Psoas muscle (tissue), 8 donors: ENCODE measurements at regions of chr17 and their contacts with region 1.

Region 1: DNA sequence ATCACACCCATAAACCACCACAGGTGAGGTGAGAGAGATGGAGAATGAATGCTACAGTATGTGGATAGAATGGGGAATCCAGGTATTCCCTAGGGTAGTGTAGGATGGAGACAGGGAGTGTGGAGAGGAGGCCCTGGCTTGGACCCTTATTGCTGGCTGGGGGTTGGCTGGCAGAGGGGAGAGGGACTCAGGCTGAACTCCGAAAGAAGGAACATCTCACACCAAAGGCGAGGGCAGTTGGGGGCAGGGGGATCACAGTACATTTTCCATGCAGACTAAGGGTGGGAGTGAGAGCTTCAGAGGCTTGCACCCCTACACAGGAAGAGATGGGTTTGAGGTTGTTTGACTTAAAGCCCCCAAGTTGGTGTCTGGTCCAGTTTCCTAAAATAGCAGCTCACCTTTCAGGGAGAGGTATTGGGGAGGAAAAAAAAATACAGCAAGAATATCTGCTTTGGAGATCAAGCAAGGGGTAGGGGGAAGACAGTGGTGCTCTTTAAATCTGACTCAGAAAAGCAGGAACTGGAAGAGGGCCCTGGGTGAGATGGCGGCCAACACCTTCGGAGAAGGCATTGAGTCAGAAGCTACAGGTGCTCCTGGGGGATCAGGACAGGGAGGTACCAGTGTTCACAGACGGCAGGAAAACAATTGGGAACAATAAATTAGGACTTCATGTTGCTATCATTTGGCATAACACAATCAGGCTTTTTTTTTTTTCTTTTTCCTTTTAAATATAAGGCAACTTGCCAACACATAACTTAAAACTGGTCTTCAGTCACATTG is 12.4 kb downstream of the TRAF4 start:
- DNase-seq: no peak
- ATAC-seq: no peak
- H3K4me3 ChIP-seq: no peak overlapping the region
- H3K27ac ChIP-seq: no peak overlapping the region
- H3K4me1 ChIP-seq: peaks cover 7% of the 10 kb centered on the region
- H3K27me3 ChIP-seq: no peaks in the 10 kb centered on the region
- CTCF ChIP-seq: no peak

Region 2: DNA sequence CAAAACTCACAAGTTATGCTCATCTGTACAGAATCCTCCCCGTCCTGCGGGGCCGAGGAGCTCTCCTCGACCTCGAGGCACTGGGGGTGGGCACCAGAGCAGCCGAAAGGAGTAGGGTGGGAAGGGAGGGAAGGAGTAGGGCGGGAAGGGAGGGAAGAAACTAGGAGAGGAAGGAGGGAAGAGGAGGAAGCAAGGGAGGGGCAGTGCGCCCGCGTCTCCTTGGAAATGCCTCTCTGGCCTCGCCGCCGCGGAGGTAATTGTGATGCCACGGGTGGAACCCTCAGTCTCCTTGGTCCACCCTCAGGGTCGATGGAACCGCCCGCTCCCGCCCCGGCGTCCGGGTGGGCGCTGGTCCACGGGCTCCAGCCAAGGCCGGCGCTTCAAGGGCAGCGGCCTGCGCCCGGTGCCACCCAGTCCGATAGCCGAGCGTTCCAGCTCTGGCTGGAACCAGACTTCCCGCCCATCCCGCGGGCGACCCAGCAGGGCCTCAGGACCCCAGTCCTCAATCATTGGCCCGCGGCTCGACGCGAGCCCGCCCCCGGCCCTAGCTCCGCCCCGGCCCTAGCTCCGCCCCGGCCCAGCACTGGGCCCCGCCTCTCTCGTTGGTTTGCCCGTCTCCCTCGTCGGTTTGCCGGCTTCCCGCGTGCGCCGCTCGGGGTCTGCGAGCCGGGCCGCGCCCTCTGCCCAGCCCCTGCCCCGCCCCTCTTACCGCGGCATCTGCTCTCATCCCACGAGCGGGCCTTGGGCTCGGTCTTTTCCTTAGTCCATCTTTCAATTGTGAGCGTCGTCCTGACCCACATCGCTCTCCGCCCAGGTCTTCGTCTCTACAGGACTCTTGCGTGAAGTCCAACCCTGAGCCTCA is 45.1 kb before region 1 on chr17:
- intact Hi-C with region 1: no loop called
- DNase-seq: peak; percentile 87 to 91
- ATAC-seq: peak; percentile 89 to 92 (median 92)
- H3K4me3 ChIP-seq: peak overlapping the region; percentile 85
- H3K27ac ChIP-seq: peak overlapping the region; percentile 82
- H3K4me1 ChIP-seq: peaks cover 5% of the 10 kb centered on the region
- H3K27me3 ChIP-seq: peaks cover 0 to 2% (median 0%) of the 10 kb centered on the region in 3 donors
- CTCF ChIP-seq: no peak

Region 3: GRCh38 chr17:28916302-28916934 is 160.2 kb after region 1 on chr17:
- intact Hi-C with region 1: loop called in 1 of 2 experiments (anchors 2 kb)
- DNase-seq: no peak
- ATAC-seq: peak; percentile 69 to 84 (median 74)
- H3K4me3 ChIP-seq: no peak overlapping the region
- H3K27ac ChIP-seq: peak overlapping the region; percentile 72
- H3K4me1 ChIP-seq: peaks cover 19% of the 10 kb centered on the region
- H3K27me3 ChIP-seq: no peaks in the 10 kb centered on the region
- CTCF ChIP-seq: peak; percentile 69